ENCODE measurements at regions of chr5 and their contacts with region 1.

Region 1: DNA sequence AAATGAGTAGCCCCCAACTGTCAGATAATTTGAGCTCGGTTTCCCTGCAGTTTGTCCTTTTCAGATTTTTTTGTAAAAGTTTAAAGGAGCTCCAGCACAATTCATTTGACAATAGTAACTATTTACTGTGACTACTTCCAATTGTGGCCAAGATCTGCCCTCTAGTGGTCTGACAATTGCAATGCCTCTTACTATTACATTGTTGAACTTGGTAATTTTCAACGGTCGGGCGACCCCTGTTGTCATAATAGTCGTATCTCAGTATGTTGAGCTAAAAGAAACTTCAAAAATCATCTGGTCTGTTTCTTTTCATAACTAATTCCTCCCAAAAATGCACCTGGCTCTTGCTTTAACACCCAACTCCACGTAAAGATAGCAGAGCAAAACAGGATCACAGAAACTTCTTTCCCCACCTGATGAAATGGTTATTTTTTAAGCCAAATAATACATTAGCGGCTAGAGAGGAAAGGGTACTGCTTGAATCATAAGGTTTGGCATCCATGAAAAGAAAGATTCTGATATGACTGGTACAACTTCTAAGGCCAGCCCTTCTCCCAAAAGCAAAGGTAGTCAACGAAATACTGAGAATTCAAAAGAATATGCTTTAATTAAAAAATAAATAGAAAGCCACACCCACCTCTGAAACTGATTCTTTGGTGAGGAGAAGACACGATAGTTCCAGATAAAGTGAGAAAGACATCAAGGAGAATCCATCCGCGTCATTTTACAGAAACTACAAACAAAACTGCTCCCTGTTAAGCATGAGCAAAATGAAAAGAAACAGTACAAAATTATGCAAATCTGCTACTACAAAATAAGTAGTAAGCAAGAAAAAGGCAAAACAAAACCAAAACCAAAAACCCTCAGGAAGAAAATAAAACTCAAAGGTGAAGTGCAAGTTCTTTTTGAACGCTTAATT is 76.9 kb upstream of the HTR4 start:
- DNase-seq: peak; percentile 85
- H3K27ac ChIP-seq: no peak overlapping the region
- CTCF ChIP-seq: peak; percentile 98

Region 2: GRCh38 chr5:148443998-148444397 is 287.2 kb before region 1 on chr5:
- CTCF ChIA-PET with region 1: interaction called, 68 read pairs
- POLR2A ChIA-PET with region 1: no interaction called
- DNase-seq: peak; percentile 70
- H3K27ac ChIP-seq: no peak overlapping the region
- CTCF ChIP-seq: peak; percentile 85

Region 3: DNA sequence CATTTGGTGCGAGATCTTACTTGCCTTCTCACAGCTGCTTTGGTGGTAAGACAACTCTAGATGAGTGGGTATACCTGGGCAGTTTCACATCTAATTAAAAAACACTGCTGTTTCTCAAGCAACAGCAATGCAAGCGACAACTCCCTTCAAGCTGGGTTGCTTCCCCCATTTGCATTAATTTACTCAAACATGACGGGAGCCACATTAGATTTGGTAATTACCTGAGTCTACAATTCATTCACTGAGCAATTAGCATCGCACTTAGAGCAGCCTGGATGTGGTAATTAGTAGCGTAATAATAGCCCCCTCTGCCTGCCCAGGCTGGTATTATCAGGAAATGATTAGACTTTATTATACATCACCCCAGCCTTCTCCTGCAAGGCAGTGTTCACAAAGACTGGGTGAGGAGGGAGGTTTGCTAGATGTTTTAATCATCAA is 274.0 kb before region 1 on chr5:
- CTCF ChIA-PET with region 1: interaction called, 14 read pairs
- POLR2A ChIA-PET with region 1: no interaction called
- DNase-seq: peak; percentile 54
- H3K27ac ChIP-seq: no peak overlapping the region
- CTCF ChIP-seq: no peak; the same call in 1 of the 2 replicates

Region 4: GRCh38 chr5:149002053-149002452 is 270.9 kb after region 1 on chr5:
- CTCF ChIA-PET with region 1: interaction called, 68 read pairs
- POLR2A ChIA-PET with region 1: no interaction called
- DNase-seq: peak; percentile 86
- H3K27ac ChIP-seq: peak overlapping the region; percentile 40; the same call in 1 of the 2 replicates
- CTCF ChIP-seq: no peak

Region 5: GRCh38 chr5:149035372-149035790 is 304.2 kb after region 1 on chr5:
- CTCF ChIA-PET with region 1: interaction called, 100 read pairs
- POLR2A ChIA-PET with region 1: no interaction called
- DNase-seq: peak; percentile 75
- H3K27ac ChIP-seq: no peak overlapping the region
- CTCF ChIP-seq: peak; percentile 98

Region 6: DNA sequence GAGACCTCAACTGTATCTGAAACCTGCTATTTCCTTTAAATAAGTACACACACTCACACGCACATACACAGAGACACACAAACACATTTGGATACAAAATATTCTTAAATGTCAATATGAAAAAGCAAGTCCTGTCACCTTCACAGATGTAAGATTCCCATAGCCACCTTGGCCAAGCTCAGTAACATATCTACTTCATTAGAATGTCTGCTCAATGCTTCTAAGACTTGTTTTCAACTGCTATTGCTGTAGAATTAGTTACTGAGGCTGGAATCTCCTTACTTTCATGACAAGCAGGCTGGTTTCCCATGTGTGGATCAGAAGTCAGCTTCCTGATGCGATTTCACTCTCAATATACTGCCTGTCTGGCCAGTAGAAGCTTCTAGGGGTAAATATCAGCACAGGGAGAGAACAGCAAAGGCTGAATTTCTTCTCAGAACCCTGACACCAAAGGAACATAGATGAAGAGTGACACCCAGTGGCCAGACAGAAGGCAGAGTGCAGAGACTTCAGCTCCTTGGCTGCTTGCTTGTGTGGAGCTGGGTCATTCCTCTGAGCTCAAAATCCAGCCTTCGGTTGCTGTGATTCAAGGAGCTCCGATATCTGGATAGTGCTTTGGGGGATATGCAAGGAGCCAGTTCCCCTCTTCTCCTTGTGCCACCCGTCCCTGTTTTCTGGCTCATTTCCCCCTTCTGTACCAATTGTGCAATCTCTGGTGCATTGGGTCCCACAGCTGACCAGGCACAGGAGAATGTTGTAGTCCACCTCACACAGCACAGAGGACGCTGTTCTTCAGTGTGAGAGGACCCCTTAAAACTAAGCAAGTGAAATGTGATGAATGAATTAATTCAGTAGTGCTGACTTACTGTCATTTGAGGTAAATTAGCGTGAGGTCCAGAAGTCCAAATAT is 383.5 kb after region 1 on chr5:
- CTCF ChIA-PET with region 1: interaction called, 28 read pairs
- POLR2A ChIA-PET with region 1: no interaction called
- DNase-seq: peak; percentile 75
- H3K27ac ChIP-seq: no peak overlapping the region; the same call in 1 of the 2 replicates
- CTCF ChIP-seq: peak; percentile 90

Measured in RWPE1 (cell line).